CD4-positive, alpha-beta T cell (primary cell): ENCODE measurements at regions of chr7 and their contacts with region 1.

Region 1: GRCh38 chr7:143240291-143241168 is 18.7 kb downstream of the TAS2R40 start:
- DNase-seq: peak; percentile 43 to 88 (median 66)
- ATAC-seq: peak; percentile 99
- H3K4me3 ChIP-seq: no peak overlapping the region
- H3K4me3 Mint-ChIP-seq: peak overlapping the region; percentile 7
- H3K27ac ChIP-seq: no peak overlapping the region
- H3K27ac Mint-ChIP-seq: no peak overlapping the region
- H3K4me1 ChIP-seq: peaks cover 12% of the 10 kb centered on the region
- H3K4me1 Mint-ChIP-seq: peaks cover 31% of the 10 kb centered on the region
- H3K27me3 ChIP-seq: peaks cover 0 to 6% of the 10 kb centered on the region in 2 experiments
- H3K27me3 Mint-ChIP-seq: peaks cover 10% of the 10 kb centered on the region
- CTCF ChIP-seq: peak; percentile 95

Region 2: GRCh38 chr7:143256325-143256724 is 15.8 kb after region 1 on chr7:
- CTCF ChIA-PET with region 1: interaction called, 17 read pairs
- POLR2A ChIA-PET with region 1: interaction called, 21 read pairs
- intact Hi-C with region 1: no loop called
- DNase-seq: no peak
- ATAC-seq: no peak
- H3K4me3 ChIP-seq: no peak overlapping the region
- H3K4me3 Mint-ChIP-seq: no peak overlapping the region
- H3K27ac ChIP-seq: peak overlapping the region in 1 of 2 donors; percentile 33
- H3K27ac Mint-ChIP-seq: peak overlapping the region; percentile 42
- H3K4me1 ChIP-seq: peaks cover 46% of the 10 kb centered on the region
- H3K4me1 Mint-ChIP-seq: peaks cover 81% of the 10 kb centered on the region
- H3K27me3 ChIP-seq: no peaks in the 10 kb centered on the region
- H3K27me3 Mint-ChIP-seq: no peaks in the 10 kb centered on the region
- CTCF ChIP-seq: no peak

Region 3: GRCh38 chr7:143279186-143280098 is 38.9 kb after region 1 on chr7:
- CTCF ChIA-PET with region 1: interaction called, 24 read pairs
- POLR2A ChIA-PET with region 1: interaction called, 8 read pairs
- intact Hi-C with region 1: no loop called
- DNase-seq: peak in 3 of 14 experiments; percentile 56 to 78 (median 67)
- ATAC-seq: peak; percentile 84
- H3K4me3 ChIP-seq: peak overlapping the region; percentile 28
- H3K4me3 Mint-ChIP-seq: peak overlapping the region; percentile 78
- H3K27ac ChIP-seq: peak overlapping the region; percentile 37 to 74
- H3K27ac Mint-ChIP-seq: peak overlapping the region; percentile 88
- H3K4me1 ChIP-seq: peaks cover 30% of the 10 kb centered on the region
- H3K4me1 Mint-ChIP-seq: peaks cover 42% of the 10 kb centered on the region
- H3K27me3 ChIP-seq: no peaks in the 10 kb centered on the region
- H3K27me3 Mint-ChIP-seq: no peaks in the 10 kb centered on the region
- CTCF ChIP-seq: no peak

Region 4: GRCh38 chr7:143299840-143300239 is 59.3 kb after region 1 on chr7:
- CTCF ChIA-PET with region 1: interaction called, 92 read pairs
- POLR2A ChIA-PET with region 1: interaction called, 14 read pairs
- intact Hi-C with region 1: loop called (anchors 1 kb)
- DNase-seq: peak; percentile 52 to 83 (median 67)
- ATAC-seq: peak; percentile 100
- H3K4me3 ChIP-seq: no peak overlapping the region
- H3K4me3 Mint-ChIP-seq: no peak overlapping the region
- H3K27ac ChIP-seq: no peak overlapping the region
- H3K27ac Mint-ChIP-seq: no peak overlapping the region
- H3K4me1 ChIP-seq: peaks cover 11% of the 10 kb centered on the region
- H3K4me1 Mint-ChIP-seq: peaks cover 40% of the 10 kb centered on the region
- H3K27me3 ChIP-seq: no peaks in the 10 kb centered on the region
- H3K27me3 Mint-ChIP-seq: no peaks in the 10 kb centered on the region
- CTCF ChIP-seq: peak; percentile 70

Region 5: GRCh38 chr7:143416565-143417149 is 176.1 kb after region 1 on chr7:
- CTCF ChIA-PET with region 1: interaction called, 16 read pairs
- POLR2A ChIA-PET with region 1: interaction called, 9 read pairs
- intact Hi-C with region 1: loop called (anchors 1 kb)
- DNase-seq: peak in 4 of 14 experiments; percentile 20 to 75 (median 68)
- ATAC-seq: no peak
- H3K4me3 ChIP-seq: no peak overlapping the region
- H3K4me3 Mint-ChIP-seq: no peak overlapping the region
- H3K27ac ChIP-seq: no peak overlapping the region
- H3K27ac Mint-ChIP-seq: no peak overlapping the region
- H3K4me1 ChIP-seq: no peaks in the 10 kb centered on the region
- H3K4me1 Mint-ChIP-seq: peaks cover 46% of the 10 kb centered on the region
- H3K27me3 ChIP-seq: no peaks in the 10 kb centered on the region
- H3K27me3 Mint-ChIP-seq: no peaks in the 10 kb centered on the region
- CTCF ChIP-seq: peak; percentile 82